CD4-positive, alpha-beta memory T cell (primary cell): ENCODE measurements at regions of chr16 and their contacts with region 1.

Region 1: GRCh38 chr16:1308977-1309885 is at the start of gene UBE2I:
- DNase-seq: peak; percentile 96 to 100 (median 98)
- H3K4me3 ChIP-seq: peak within 1 kb of the TSS; percentile 85 to 97
- H3K4me3 Mint-ChIP-seq: peak within 1 kb of the TSS; percentile 89 to 100 (median 98)
- H3K27ac ChIP-seq: peak within 1 kb of the TSS; percentile 100
- H3K27ac Mint-ChIP-seq: peak within 1 kb of the TSS; percentile 99 to 100 (median 99)
- H3K4me1 ChIP-seq: peaks cover 39% of the 10 kb centered on the region
- H3K4me1 Mint-ChIP-seq: peaks cover 16 to 47% (median 35%) of the 10 kb centered on the region in 4 donors
- H3K27me3 ChIP-seq: no peaks in the 10 kb centered on the region
- H3K27me3 Mint-ChIP-seq: no peaks in the 10 kb centered on the region
- total RNA-seq, gene UBE2I: 170 to 177 TPM

Region 2: GRCh38 chr16:1258906-1259759 is 50.1 kb before region 1 on chr16:
- CTCF ChIA-PET with region 1: no interaction called
- POLR2A ChIA-PET with region 1: no interaction called
- intact Hi-C with region 1: no loop called
- DNase-seq: no peak
- H3K4me3 ChIP-seq: peak overlapping the region in 1 of 2 donors; percentile 41
- H3K4me3 Mint-ChIP-seq: peak overlapping the region; percentile 47 to 83 (median 62)
- H3K27ac ChIP-seq: no peak overlapping the region
- H3K27ac Mint-ChIP-seq: peak overlapping the region in 1 of 7 donors; percentile 61
- H3K4me1 ChIP-seq: peaks cover 10% of the 10 kb centered on the region
- H3K4me1 Mint-ChIP-seq: peaks cover 4 to 10% (median 6%) of the 10 kb centered on the region in 4 donors
- H3K27me3 ChIP-seq: no peaks in the 10 kb centered on the region
- H3K27me3 Mint-ChIP-seq: peaks cover 13 to 14% of the 10 kb centered on the region in 2 donors

Region 3: DNA sequence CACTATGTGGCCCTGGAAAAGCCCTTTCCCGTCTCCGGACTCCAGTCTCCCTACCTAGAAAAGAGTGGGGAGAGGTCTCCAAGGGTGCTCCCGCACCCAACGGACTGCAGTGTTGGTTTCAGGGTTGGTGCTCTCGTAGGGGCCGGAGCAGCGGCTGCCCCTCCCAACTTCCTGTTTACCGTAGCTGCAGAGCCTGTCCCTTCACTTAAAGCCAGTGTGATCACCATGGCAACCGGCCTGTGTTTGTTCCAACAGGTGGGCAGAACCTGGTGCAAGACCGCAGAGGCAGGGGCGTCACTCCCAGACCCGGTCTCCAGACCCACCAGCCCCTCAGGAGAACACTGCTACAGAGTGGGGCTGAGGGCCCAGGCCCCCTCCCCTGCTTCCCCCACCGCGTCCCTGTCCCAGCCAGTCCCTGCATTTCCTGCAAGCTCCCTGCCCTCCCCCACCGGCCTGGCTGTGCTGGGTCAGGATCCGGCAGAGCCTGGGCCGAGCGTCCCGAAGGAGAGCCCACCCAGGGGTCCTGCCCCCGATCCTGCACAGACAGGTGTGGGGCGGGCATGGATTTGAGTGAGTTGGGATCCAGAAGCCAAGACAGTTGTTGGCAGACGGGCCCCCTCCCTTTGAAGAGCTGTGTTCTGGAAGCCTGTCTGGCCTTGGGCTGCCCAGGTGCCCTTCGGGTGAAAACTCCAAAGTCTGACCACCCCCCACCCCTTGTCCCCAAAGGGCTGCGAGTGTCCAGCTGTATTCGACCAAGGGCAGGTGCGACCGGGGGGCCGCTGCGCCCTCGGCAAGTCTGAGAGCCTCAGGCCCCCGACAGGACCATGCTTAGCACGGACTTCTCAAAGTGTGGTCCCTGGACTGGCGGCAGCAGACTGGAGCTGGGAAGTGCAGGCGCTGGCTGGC is 22.7 kb after region 1 on chr16:
- CTCF ChIA-PET with region 1: no interaction called
- POLR2A ChIA-PET with region 1: interaction called, 16 read pairs
- intact Hi-C with region 1: no loop called
- DNase-seq: peak; percentile 43 to 77 (median 52)
- H3K4me3 ChIP-seq: peak overlapping the region; percentile 15 to 24
- H3K4me3 Mint-ChIP-seq: peak overlapping the region; percentile 74 to 90 (median 82)
- H3K27ac ChIP-seq: peak overlapping the region; percentile 24
- H3K27ac Mint-ChIP-seq: peak overlapping the region; percentile 68 to 90 (median 78)
- H3K4me1 ChIP-seq: peaks cover 33% of the 10 kb centered on the region
- H3K4me1 Mint-ChIP-seq: peaks cover 7 to 26% (median 16%) of the 10 kb centered on the region in 4 donors
- H3K27me3 ChIP-seq: peaks cover 17% of the 10 kb centered on the region
- H3K27me3 Mint-ChIP-seq: peaks cover 3 to 6% of the 10 kb centered on the region in 2 donors

Region 4: DNA sequence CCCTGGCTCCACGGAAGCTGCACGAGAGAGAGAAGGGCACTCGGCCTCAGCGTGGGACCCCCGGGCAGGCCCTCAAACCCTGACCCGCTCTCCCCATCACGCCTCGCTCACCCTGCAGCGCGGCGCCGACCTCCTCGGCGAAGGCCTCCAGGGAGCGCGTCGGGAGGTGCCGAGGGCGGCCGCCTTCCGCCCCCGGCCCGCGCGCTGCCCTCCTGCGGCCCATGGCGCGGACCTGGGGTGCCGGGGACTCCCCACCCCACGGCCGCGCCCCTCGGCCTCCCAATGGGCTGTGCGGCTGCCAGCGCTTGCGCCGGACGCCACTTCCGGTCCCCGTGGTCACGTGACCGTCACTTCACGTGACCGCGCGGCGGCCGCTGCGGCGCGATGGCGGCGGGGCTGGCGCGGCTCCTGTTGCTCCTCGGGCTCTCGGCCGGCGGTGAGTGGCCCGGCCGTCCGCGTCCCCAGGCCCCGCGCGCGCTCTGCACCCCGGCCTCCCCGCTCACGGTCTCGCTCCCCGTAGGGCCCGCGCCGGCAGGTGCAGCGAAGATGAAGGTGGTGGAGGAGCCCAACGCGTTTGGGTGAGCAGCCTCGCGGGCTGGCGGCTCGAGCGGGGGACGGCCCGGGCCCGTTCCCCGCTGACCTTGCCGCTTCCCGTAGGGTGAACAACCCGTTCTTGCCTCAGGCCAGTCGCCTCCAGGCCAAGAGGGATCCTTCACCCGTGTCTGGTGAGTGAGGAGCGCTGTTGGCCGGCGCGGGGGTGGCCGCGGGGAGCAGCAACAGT is 42.5 kb after region 1 on chr16 and contains the starts of genes GNPTG and TSR3:
- CTCF ChIA-PET with region 1: no interaction called
- POLR2A ChIA-PET with region 1: interaction called, 7 read pairs
- intact Hi-C with region 1: loop called (anchors 1 kb)
- DNase-seq: peak; percentile 82 to 91 (median 85)
- H3K4me3 ChIP-seq: peak within 1 kb of the TSS; percentile 32 to 82
- H3K4me3 Mint-ChIP-seq: peak within 1 kb of the TSS; percentile 80 to 90 (median 84)
- H3K27ac ChIP-seq: peak within 1 kb of the TSS; percentile 75
- H3K27ac Mint-ChIP-seq: peak within 1 kb of the TSS; percentile 82 to 96 (median 91)
- H3K4me1 ChIP-seq: peaks cover 23% of the 10 kb centered on the region
- H3K4me1 Mint-ChIP-seq: peaks cover 18 to 52% (median 29%) of the 10 kb centered on the region in 4 donors
- H3K27me3 ChIP-seq: no peaks in the 10 kb centered on the region
- H3K27me3 Mint-ChIP-seq: no peaks in the 10 kb centered on the region
- total RNA-seq, gene GNPTG: 58.7 to 61.5 TPM
- total RNA-seq, gene TSR3: 38.1 to 40.3 TPM

Region 5: DNA sequence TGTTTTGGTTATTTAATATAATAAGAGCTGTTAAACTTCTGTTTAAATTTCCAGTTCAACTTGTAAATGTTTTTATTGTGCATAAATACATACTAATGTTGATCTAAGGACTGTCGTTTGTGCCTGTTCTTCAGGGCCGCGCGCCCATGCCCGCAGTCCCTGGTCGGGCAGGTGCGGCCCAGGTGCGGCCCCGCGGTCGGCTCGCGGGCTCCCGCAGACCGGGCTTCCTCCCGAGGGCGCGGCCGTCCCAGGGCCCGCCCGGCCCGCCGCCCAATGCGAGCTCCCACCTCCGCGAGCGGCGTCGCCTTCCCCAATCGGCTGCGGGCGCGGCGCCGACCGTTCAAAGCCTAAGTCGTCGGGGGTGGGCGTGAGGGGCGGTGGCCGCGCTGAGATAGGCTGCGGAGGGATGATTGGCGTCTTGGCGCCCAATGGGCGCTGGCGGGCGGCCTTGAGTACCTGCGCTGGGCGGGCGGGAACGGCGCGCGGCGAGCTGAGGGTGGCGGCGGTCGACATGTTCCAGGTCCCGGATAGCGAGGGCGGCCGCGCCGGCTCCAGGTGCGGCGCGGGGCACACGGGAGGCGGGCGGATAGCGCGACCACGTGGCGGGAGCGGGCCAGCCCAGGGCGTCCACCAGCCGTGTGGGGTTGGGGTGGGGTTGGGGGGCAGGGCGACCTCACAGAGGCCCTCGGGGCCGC is 368.7 kb after region 1 on chr16 and contains the start of gene JPT2:
- CTCF ChIA-PET with region 1: no interaction called
- POLR2A ChIA-PET with region 1: no interaction called
- intact Hi-C with region 1: loop called (anchors 1 kb)
- DNase-seq: peak; percentile 93 to 95 (median 95)
- H3K4me3 ChIP-seq: peak within 1 kb of the TSS; percentile 46 to 73
- H3K4me3 Mint-ChIP-seq: peak within 1 kb of the TSS; percentile 86 to 94 (median 90)
- H3K27ac ChIP-seq: peak within 1 kb of the TSS; percentile 70
- H3K27ac Mint-ChIP-seq: peak within 1 kb of the TSS; percentile 77 to 95 (median 86)
- H3K4me1 ChIP-seq: peaks cover 28% of the 10 kb centered on the region
- H3K4me1 Mint-ChIP-seq: peaks cover 13 to 49% (median 29%) of the 10 kb centered on the region in 4 donors
- H3K27me3 ChIP-seq: no peaks in the 10 kb centered on the region
- H3K27me3 Mint-ChIP-seq: no peaks in the 10 kb centered on the region
- total RNA-seq, gene JPT2: 38.1 to 43.1 TPM

Region 6: DNA sequence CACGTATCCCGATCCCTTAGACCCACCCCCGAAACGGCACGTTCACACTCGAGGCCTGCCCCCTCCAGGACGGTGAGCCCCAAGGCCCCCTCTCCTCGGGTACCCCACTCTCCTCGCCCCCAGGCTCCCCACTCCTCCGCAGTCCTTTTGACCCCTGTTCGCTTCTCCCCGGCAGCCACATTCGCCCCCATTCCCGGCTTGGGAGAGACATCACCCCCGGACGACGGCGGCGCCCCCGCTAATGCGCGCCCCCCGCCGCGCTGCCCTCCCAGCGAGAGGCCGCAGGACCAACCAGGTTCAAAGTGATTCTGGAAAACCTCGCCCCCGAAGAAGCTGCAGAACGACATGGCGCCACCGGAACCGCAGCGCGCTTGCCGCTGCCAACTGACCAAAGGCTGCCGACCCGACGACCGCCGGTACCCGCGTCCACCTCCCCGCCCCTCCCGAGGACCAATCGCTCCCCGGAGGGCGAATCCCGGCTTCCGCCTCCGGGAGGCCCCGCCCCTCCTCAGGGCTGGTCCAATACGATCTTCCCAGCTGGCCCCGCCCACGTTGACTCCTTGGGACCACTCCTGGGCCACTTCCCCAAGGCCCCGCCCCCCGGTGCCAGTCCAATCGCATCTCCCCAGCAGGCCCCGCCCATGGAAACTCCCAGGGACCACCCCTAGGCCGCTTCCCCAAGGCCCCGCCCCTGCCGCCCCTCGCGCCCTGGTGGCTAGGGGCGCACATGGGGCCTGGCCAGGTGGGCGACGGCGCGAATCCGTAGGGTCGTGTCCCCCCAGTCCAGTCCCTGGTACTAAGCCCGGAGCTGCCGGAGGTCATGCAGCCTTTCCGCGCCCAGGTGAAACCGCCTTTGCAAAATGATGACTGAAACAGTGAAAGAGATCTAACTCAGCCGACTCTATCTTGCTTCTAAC is 633.8 kb after region 1 on chr16 and contains the start of gene MSRB1:
- CTCF ChIA-PET with region 1: no interaction called
- POLR2A ChIA-PET with region 1: interaction called, 3 read pairs
- intact Hi-C with region 1: loop called (anchors 2 kb)
- DNase-seq: peak; percentile 97 to 99 (median 98)
- H3K4me3 ChIP-seq: peak within 1 kb of the TSS; percentile 52 to 90
- H3K4me3 Mint-ChIP-seq: peak within 1 kb of the TSS; percentile 82 to 91 (median 86)
- H3K27ac ChIP-seq: peak within 1 kb of the TSS; percentile 58
- H3K27ac Mint-ChIP-seq: peak within 1 kb of the TSS; percentile 64 to 91 (median 70)
- H3K4me1 ChIP-seq: peaks cover 21% of the 10 kb centered on the region
- H3K4me1 Mint-ChIP-seq: peaks cover 0 to 26% (median 7%) of the 10 kb centered on the region in 4 donors
- H3K27me3 ChIP-seq: no peaks in the 10 kb centered on the region
- H3K27me3 Mint-ChIP-seq: no peaks in the 10 kb centered on the region
- total RNA-seq, gene MSRB1: 9.3 to 10.6 TPM